GM13976 (cell line): ENCODE measurements at regions of chr13 and their contacts with region 1.

Region 1: GRCh38 chr13:28636674-28637317 is 22.1 kb upstream of the POMP start:
- DNase-seq: peak; percentile 43
- CTCF ChIP-seq: peak; percentile 68

Region 2: DNA sequence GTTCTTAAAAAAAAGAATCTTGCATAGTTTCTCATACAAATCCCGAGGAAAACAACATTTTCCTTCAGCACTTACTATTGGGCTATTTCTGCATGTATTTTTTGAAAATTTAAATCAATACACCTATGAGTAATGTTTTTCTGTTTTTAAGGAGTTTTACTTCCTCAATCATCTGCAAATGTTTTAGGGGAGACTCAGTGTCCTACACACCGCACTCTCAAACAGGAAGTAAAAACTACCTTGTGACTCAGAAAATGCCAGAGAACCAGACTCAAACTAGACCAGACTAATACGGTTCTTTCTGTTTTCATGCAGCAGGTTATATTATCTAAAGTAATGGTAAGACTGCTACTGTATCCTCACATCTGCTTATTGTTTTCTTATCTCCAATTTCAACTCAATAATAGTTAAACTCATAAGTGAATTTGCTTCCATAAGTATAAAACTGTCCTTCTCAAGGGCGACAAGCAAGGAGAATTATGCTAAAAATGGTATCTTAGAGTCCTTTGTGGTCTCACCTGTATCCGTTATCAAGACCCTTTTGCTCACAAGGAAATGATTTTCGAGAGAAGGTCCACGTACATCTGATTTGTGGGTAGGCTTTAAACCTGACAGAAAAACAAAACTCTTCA is 588.9 kb before region 1 on chr13:
- in situ Hi-C with region 1: loop called (anchors 25 kb)
- DNase-seq: peak; percentile 67
- CTCF ChIP-seq: no peak

Region 3: DNA sequence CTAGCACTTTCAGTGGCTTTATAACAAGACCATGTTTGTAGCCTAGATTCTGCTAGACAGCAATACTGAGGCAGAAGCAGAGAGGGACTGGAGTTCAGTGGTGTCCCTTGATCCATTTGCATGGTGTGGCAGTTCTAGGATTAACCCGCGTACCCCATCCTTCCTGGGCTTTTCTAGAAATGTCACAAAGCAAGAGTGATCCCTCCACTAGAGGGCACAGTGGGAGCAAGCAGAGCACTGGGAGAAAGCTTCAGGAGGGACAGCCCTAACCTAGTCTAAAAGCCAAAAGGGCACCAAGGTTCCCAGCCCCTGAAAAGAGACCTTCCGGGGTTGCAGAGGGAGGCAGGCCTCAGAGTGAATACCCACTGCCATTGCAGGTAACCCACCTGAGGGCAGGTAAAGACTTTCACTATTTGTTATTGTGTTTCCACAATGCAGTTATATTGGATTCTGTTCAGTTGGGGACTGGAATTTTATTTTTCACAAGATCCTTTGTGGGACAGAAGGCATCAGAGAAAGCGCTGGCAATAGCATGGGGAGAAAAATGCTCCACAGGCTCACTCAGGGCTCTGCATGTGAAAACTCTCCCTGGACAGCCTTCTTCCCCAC is 312.5 kb before region 1 on chr13:
- in situ Hi-C with region 1: loop called (anchors 5 kb)
- DNase-seq: peak; percentile 80
- CTCF ChIP-seq: peak; percentile 73